Breast epithelium (tissue), 4 donors: ENCODE measurements at regions of chr9 and their contacts with region 1.

Region 1: GRCh38 chr9:128558431-128559310 is 6.3 kb downstream of the SPTAN1 start:
- DNase-seq: peak; percentile 62 to 73
- H3K4me3 ChIP-seq: peak overlapping the region in 1 of 3 donors; percentile 21
- H3K27ac ChIP-seq: peak overlapping the region; percentile 68
- H3K4me1 ChIP-seq: peaks cover 18 to 33% of the 10 kb centered on the region in 2 donors
- H3K27me3 ChIP-seq: no peaks in the 10 kb centered on the region
- CTCF ChIP-seq: no peak
- POLR2A ChIP-seq: no peak

Region 2: GRCh38 chr9:129118799-129119198 is 560.1 kb after region 1 on chr9:
- intact Hi-C with region 1: loop called (anchors 5 kb)
- DNase-seq: no peak
- H3K4me3 ChIP-seq: no peak overlapping the region
- H3K27ac ChIP-seq: no peak overlapping the region
- H3K4me1 ChIP-seq: no peaks in the 10 kb centered on the region
- H3K27me3 ChIP-seq: no peaks in the 10 kb centered on the region
- CTCF ChIP-seq: no peak
- POLR2A ChIP-seq: no peak

Region 3: DNA sequence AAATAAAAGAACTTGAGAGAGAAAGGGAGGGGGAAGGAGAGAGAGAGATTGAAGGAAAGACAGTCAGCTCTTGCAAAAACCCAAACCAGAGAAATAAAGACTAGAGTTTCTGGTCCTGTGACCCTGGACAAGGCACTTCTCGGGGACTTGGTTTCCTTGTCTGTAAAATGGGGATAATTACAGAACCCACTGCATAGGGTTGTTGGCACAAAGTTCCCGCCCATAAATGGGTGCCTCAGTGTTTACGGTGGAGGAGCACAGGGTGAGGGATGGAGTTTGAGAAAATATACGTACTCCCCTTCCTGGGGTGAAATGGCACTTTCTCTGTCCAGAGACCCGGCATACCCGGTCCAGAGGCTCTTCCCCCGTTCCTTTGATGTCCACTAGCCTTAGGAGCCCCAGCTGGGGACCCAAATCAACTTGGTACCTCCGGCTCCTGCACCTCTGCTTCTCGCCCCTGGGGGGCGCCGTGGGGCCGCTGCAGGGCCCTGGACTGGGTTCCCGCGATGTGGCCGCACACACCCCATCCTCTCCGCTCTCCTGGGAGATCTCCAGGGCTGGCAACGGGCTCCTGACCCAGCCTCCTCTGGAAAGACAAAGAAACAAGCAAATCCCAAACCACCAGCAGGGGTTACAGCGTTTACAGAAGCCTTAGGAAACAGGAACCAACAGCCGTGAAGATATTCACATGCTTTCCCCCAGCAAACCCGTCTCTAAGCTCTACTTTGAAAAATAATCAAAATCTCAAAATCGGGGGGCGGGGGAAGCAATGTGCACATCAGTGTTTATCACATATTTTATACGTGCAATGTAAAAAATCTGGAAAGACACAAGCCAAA is 1167.9 kb after region 1 on chr9:
- intact Hi-C with region 1: no loop called
- DNase-seq: peak; percentile 47 to 71
- H3K4me3 ChIP-seq: peak overlapping the region in 2 of 3 donors; percentile 9 to 15
- H3K27ac ChIP-seq: peak overlapping the region; percentile 68 to 85
- H3K4me1 ChIP-seq: peaks cover 0 to 6% of the 10 kb centered on the region in 2 donors
- H3K27me3 ChIP-seq: no peaks in the 10 kb centered on the region
- CTCF ChIP-seq: peak; percentile 76 to 88 (median 87)
- POLR2A ChIP-seq: no peak